Activated B cell treated with CpG ODN at 0.5 μM for 24 hours (primary cell): ENCODE measurements at regions of chr6 and their contacts with region 1.

Region 1: DNA sequence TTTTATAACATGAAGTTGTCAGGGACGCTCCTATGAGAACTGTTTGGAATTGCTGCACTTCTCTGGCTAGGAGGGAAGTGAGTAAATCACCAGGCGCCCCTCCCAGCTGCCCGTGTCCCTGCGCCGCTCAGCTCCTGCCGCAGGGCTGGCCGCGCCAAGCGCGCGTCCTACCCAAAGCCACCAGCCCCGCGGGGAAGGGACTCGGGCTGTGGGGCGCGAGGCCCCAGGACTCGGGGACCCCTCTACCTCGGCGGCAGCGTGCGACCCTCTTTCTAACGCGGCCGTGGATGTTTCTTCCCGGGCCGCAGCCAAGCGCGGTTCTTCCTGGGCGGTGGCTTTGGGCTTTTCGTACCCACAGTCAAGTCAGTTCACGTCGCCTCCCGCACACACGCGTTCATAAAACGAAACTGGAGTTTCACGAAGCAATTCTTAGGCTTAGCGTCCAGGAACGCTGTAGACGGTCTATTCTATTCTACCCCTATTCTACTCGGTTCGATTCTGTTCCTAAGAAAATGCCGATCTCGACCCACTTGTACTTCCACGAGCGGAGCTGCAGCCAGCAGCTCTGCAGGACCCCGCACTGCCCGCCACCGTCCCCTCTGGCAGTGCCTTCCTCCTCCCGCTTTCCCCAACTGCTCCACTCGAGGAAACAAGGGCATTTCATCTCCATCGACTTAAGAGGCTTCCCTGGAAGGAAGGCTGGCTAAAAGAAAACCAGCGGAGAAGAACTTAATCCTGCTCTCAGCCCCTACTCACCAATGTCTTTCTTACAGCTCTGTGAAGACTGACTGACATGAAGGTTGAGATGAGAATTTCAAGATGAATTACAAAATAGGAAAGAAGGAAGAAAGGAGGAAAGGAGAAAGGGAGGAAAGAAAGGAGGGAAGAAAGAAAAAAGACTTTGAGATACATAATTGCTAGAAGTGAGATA is 15.4 kb downstream of the FOXC1 start:
- DNase-seq: no peak
- ATAC-seq: peak; percentile 53
- H3K4me3 Mint-ChIP-seq: peak overlapping the region; percentile 78
- H3K27ac Mint-ChIP-seq: no peak overlapping the region
- H3K4me1 Mint-ChIP-seq: peaks cover 17% of the 10 kb centered on the region
- H3K27me3 Mint-ChIP-seq: peaks cover 67% of the 10 kb centered on the region
- CTCF ChIP-seq: no peak

Region 2: DNA sequence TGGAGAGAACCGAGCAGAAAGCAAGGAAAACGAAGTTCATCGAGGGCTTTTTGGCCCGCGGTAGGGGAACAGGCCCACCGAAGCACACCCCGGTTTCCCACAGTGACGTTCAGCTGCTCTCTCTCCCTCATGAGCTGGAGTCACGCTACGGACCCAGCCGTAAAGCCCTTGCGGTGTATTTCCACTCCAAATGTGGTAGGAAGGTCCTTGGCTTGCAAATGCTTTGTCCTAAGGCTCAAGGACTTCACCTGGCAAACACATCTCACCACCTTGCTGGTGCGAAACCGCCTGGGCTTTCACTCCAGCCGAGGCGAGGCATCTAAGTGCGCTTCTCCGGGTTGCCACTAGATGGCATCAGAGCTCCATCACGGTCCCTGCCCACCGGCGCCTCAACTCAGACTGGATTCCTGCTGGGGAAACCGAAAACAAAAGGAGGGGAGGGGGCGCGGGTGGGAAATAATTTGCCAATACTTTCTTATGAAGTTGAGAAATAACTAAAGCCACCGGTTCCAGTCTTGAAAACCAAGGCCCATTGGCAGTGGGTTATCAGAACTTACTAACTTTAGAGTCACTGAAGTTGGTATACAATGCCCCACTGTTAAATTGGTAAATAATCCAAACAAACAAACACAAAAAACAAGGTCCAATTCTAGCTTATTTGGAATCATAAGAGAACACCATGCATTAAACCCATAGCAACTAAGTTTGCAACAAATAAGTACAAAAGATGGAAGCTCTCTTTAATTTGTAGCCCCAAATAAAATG is 28.8 kb before region 1 on chr6:
- CTCF ChIA-PET with region 1: no interaction called
- POLR2A ChIA-PET with region 1: no interaction called
- intact Hi-C with region 1: no loop called
- DNase-seq: peak; percentile 50
- ATAC-seq: peak; percentile 87
- H3K4me3 Mint-ChIP-seq: no peak overlapping the region
- H3K27ac Mint-ChIP-seq: no peak overlapping the region
- H3K4me1 Mint-ChIP-seq: peaks cover 4% of the 10 kb centered on the region
- H3K27me3 Mint-ChIP-seq: peaks cover 49% of the 10 kb centered on the region
- CTCF ChIP-seq: no peak

Region 3: DNA sequence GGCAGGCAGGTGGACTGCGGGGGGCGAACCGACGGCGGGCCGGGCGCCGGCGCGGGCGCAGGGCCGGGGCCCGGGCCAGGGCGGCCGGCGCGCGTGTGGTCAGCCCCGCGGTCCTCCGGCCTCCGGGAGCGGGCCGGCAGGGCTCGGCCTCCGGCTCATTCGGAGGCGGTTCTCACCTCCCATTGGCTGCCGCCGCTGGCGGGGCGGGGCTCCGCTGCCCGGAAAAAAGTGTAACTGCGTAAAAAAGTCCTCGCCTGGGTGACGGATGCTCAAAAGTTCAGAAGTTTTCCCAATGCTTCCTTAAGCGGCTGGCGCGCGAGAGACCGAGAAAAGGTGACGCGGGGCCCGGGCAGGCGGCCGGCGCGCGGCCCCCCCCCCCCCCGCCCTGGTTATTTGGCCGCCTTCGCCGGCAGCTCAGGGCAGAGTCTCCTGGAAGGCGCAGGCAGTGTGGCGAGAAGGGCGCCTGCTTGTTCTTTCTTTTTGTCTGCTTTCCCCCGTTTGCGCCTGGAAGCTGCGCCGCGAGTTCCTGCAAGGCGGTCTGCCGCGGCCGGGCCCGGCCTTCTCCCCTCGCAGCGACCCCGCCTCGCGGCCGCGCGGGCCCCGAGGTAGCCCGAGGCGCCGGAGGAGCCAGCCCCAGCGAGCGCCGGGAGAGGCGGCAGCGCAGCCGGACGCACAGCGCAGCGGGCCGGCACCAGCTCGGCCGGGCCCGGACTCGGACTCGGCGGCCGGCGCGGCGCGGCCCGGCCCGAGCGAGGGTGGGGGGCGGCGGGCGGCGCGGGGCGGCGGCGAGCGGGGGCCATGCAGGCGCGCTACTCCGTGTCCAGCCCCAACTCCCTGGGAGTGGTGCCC is 15.2 kb before region 1 on chr6 and contains the start of gene FOXC1:
- CTCF ChIA-PET with region 1: interaction called, 4 read pairs
- POLR2A ChIA-PET with region 1: interaction called, 12 read pairs
- intact Hi-C with region 1: loop called (anchors 1 kb)
- DNase-seq: peak; percentile 57
- ATAC-seq: peak; percentile 43
- H3K4me3 Mint-ChIP-seq: peak within 1 kb of the TSS; percentile 78
- H3K27ac Mint-ChIP-seq: peak within 1 kb of the TSS; percentile 35
- H3K4me1 Mint-ChIP-seq: peaks cover 43% of the 10 kb centered on the region
- H3K27me3 Mint-ChIP-seq: peaks cover 57% of the 10 kb centered on the region
- CTCF ChIP-seq: no peak
- total RNA-seq, gene FOXC1: 1.00 and 1.1 TPM in 2 replicates

Region 4: GRCh38 chr6:1739680-1740079 is 114.6 kb after region 1 on chr6:
- CTCF ChIA-PET with region 1: no interaction called
- POLR2A ChIA-PET with region 1: no interaction called
- intact Hi-C with region 1: loop called (anchors 5 kb)
- DNase-seq: peak; percentile 31
- ATAC-seq: peak; percentile 84
- H3K4me3 Mint-ChIP-seq: peak overlapping the region; percentile 72
- H3K27ac Mint-ChIP-seq: no peak overlapping the region
- H3K4me1 Mint-ChIP-seq: peaks cover 11% of the 10 kb centered on the region
- H3K27me3 Mint-ChIP-seq: no peaks in the 10 kb centered on the region
- CTCF ChIP-seq: no peak

Region 5: DNA sequence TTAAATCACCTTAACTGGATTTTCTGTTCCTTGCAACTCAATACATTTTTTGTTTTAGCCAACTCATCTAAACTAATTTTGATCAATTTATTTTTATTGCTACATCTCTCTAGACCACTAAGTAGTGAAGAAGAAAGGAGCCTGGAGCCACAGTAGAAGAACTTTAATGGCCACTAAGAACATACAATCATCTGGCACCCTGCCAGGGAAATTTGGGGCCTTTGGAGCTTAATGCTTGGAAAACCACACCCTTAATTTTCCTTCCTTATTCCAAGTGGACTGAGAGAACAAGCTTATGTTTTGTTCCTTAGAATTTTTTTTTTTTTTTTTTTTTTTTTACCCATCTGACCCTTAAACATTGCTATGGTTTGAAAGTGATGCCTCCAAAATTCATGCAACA is 632.2 kb after region 1 on chr6:
- CTCF ChIA-PET with region 1: no interaction called
- POLR2A ChIA-PET with region 1: interaction called, 12 read pairs
- intact Hi-C with region 1: no loop called
- DNase-seq: no peak
- ATAC-seq: no peak
- H3K4me3 Mint-ChIP-seq: no peak overlapping the region
- H3K27ac Mint-ChIP-seq: no peak overlapping the region
- H3K4me1 Mint-ChIP-seq: no peaks in the 10 kb centered on the region
- H3K27me3 Mint-ChIP-seq: no peaks in the 10 kb centered on the region
- CTCF ChIP-seq: no peak

Region 6: GRCh38 chr6:3231247-3232016 is 1606.3 kb after region 1 on chr6:
- CTCF ChIA-PET with region 1: no interaction called
- POLR2A ChIA-PET with region 1: no interaction called
- intact Hi-C with region 1: loop called (anchors 10 kb)
- DNase-seq: no peak
- ATAC-seq: no peak
- H3K4me3 Mint-ChIP-seq: peak overlapping the region; percentile 21
- H3K27ac Mint-ChIP-seq: no peak overlapping the region
- H3K4me1 Mint-ChIP-seq: peaks cover 47% of the 10 kb centered on the region
- H3K27me3 Mint-ChIP-seq: peaks cover 65% of the 10 kb centered on the region
- CTCF ChIP-seq: no peak